GM12878 (cell line): ENCODE measurements at regions of chr17 and their contacts with region 1.

Region 1: GRCh38 chr17:17269926-17270773 is 10.9 kb downstream of the COPS3 start:
- DNase-seq: no peak
- ATAC-seq: peak; percentile 45
- H3K4me3 ChIP-seq: no peak overlapping the region
- H3K27ac ChIP-seq: no peak overlapping the region
- H3K4me1 ChIP-seq: no peaks in the 10 kb centered on the region
- H3K27me3 ChIP-seq: no peaks in the 10 kb centered on the region
- CTCF ChIP-seq: peak in 2 of 3 experiments; percentile 23 to 30; a peak in 3 of 6 replicates
- EP300 ChIP-seq: no peak
- POLR2A ChIP-seq: no peak
- RAD21 ChIP-seq: no peak

Region 2: DNA sequence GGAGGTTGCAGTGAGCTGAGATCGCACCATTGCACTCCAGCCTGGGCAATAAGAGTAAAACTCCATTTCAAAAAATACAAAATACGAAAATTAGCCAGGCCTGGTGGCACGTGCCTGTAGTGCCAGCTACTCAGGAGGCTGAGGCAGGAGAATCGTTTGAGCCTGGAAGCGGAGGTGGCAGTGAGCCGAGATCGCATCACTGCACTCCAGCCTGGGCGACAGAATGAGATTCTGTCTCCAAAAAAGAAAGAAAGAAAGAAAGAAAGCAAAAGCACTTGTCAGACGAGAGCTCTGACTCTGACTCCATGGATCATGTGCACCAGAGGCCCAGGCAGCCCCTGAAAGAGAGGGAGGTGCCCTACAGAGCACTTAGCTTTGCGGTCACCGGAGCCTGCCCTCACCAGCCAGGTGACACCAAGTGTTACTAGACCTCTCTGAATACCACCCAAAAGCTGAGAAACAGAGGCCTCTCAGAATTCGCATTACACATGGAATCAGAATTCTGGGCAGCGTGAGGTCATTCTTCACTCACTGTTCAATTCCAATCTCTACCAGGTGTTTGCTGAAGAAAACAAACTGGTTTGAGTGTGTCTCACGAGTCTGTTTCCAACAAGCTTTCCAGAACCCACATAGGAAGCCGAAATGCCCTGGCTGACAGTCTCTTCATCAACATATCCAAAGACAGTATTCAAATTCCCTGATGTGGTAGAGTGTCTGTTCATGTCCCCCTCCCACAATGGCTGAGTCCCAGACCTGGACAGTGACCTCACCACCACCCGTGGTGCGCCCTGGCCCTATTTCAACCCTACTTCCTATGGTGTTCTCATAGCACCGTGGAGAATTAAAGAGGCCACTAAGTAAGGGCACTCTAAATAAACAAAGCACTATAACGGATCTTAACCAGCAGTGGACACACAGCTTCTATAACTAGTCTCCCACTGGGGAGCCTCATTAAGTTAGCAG is 34.7 kb before region 1 on chr17:
- CTCF ChIA-PET with region 1: no interaction called
- POLR2A ChIA-PET with region 1: no interaction called
- RAD21 ChIA-PET with region 1: no interaction called
- SMC1A ChIA-PET with region 1: no interaction called
- in situ Hi-C with region 1: no loop called
- intact Hi-C with region 1: no loop called
- DNase-seq: no peak
- ATAC-seq: no peak
- H3K4me3 ChIP-seq: peak overlapping the region; percentile 97
- H3K27ac ChIP-seq: no peak overlapping the region
- H3K4me1 ChIP-seq: peaks cover 6% of the 10 kb centered on the region
- H3K27me3 ChIP-seq: no peaks in the 10 kb centered on the region
- CTCF ChIP-seq: no peak
- EP300 ChIP-seq: no peak
- POLR2A ChIP-seq: no peak
- RAD21 ChIP-seq: no peak

Region 3: DNA sequence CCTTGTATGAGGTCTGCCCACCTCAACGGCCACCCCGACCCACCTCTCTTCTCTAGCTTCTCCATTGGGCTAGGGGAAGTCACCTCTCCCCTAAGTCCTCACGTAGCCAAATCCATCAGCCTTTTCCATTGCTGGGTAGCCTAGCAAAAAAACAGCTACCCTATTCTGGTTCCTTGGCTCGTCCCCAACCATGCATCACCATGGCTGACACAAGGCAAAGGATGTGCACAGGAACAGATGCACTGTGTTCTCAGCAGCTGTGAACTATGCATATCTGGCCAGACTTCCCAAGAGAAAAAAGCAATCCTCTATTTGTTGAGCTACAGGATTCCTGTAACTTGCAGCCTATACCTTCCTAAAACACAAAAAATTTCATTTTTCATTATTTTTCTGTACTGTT is 11.2 kb before region 1 on chr17:
- CTCF ChIA-PET with region 1: interaction called, 12 read pairs
- POLR2A ChIA-PET with region 1: no interaction called
- RAD21 ChIA-PET with region 1: no interaction called
- SMC1A ChIA-PET with region 1: interaction called, 3 read pairs
- in situ Hi-C with region 1: no loop called
- intact Hi-C with region 1: no loop called
- DNase-seq: no peak
- ATAC-seq: no peak
- H3K4me3 ChIP-seq: no peak overlapping the region
- H3K27ac ChIP-seq: no peak overlapping the region
- H3K4me1 ChIP-seq: no peaks in the 10 kb centered on the region
- H3K27me3 ChIP-seq: no peaks in the 10 kb centered on the region
- CTCF ChIP-seq: no peak
- EP300 ChIP-seq: no peak
- POLR2A ChIP-seq: no peak
- RAD21 ChIP-seq: no peak

Region 4: DNA sequence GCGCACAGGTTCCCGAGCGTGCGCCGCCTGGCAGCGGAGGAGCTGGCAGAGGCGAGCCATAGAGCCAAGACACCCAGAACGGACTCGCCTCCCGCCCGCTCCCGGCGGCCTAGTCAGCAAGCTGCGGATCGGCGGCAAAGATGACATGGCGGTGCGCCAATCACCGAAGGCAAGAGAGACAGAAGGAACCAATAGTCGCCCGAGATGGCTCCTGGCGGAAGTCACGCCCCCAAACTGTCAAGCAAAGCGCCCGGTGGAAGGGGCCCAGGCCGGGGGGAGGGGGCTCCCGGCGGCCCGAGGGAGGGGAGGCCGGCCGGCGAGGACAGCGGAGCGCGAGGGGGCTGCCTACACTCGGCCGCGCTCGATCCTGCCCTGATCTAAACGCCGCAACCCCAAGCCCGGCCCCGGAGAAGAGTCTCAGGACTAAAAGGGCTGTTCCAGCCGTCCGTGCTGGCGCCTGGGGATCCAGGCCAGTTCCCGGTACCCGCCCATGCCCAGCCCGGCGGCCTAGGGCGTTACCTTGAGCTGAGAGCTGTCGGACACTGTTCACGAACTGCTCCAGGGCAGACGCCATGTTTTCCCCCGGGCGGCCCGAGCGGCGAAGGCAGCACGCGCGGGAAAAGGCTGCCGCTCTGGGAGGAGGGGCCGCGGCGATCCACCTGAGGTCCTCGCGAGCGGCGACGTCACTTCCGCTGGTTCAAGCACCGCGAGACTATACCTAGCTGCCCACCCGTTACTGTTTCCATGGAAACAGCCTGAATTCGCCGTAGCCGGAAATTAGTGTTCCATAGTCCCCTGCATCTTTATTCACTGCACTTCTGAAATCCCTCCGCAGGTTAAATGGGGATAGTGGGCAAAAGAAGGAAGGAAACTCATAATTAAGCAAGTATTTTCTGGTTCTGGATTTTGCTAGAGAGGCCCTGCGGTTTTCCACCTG is 10.7 kb after region 1 on chr17 and contains the start of gene COPS3:
- CTCF ChIA-PET with region 1: interaction called, 12 read pairs
- POLR2A ChIA-PET with region 1: no interaction called
- RAD21 ChIA-PET with region 1: no interaction called
- SMC1A ChIA-PET with region 1: interaction called, 5 read pairs
- in situ Hi-C with region 1: no loop called
- intact Hi-C with region 1: no loop called
- DNase-seq: peak; percentile 84
- ATAC-seq: peak; percentile 96
- H3K4me3 ChIP-seq: peak within 1 kb of the TSS; percentile 67
- H3K27ac ChIP-seq: peak within 1 kb of the TSS; percentile 97
- H3K4me1 ChIP-seq: peaks cover 14% of the 10 kb centered on the region
- H3K27me3 ChIP-seq: no peaks in the 10 kb centered on the region
- CTCF ChIP-seq: no peak
- EP300 ChIP-seq: no peak
- POLR2A ChIP-seq: peak; percentile 94
- RAD21 ChIP-seq: no peak
- polyA plus RNA-seq, gene COPS3: 182 TPM